H1 (cell line): ENCODE measurements at regions of chr16 and their contacts with region 1.

Region 1: DNA sequence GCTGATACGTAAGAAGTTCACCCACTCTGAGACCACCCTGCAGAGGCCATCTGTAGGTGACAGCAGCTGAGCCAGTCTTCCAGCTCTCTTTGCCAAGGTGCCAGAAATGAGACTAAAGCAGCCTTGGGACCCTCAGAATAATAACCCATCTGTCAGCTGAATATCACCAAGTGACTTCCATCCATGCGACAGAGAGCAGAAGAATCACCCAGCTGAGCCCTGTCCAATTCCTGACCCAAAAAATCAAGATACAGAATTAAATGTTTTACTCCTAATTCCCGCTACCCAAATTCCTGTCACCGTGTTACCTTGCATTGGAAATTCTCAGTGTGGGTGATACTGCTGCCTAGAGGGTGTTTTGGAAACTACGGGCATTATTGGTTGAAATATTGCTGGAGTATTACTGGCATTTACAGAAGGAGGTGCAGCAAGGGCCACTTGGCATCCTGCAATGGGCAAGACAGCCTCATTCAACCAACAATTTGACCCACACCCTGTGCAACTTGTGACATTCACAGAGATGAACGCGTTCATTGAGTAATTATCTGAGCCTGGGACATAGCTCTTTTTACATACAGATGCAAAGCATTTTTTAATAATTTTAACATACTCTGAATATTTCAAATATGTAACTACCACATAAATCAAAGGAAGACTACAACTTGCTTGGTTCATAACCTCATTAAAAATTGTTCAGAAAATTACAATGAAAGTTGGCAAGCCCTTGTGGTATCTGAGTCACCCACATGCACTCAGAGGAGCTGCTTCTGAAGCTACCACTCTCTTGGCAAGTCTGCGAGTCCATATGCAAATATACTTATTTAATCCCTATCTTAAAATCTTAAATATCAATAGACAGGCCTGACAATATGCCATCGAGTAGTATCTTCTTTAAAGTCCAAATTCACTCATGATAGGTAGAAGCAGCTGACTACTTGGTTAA is 126.6 kb downstream of the C16orf95 start:
- DNase-seq: no peak
- H3K4me3 ChIP-seq: no peak overlapping the region
- H3K27ac ChIP-seq: no peak overlapping the region
- H3K4me1 ChIP-seq: peaks cover 0 to 9% (median 4%) of the 10 kb centered on the region in 4 experiments; a peak in 4 of 7 replicates
- H3K27me3 ChIP-seq: no peaks in the 10 kb centered on the region; a peak in 1 of 7 replicates
- CTCF ChIP-seq: peak in 2 of 3 experiments; percentile 50 to 57; a peak in 2 of 4 replicates
- EP300 ChIP-seq: no peak
- POLR2A ChIP-seq: no peak
- RAD21 ChIP-seq: peak; percentile 54 to 63

Region 2: GRCh38 chr16:87178177-87178863 is 12.2 kb before region 1 on chr16:
- CTCF ChIA-PET with region 1: interaction called, 13 read pairs
- POLR2A ChIA-PET with region 1: interaction called, 4 read pairs
- DNase-seq: no peak
- H3K4me3 ChIP-seq: peak overlapping the region; percentile 0 to 50 (median 20); a peak in 5 of 8 replicates
- H3K27ac ChIP-seq: no peak overlapping the region
- H3K4me1 ChIP-seq: peaks cover 0 to 16% (median 9%) of the 10 kb centered on the region in 4 experiments; a peak in 6 of 7 replicates
- H3K27me3 ChIP-seq: peaks cover 0 to 6% (median 1%) of the 10 kb centered on the region in 4 experiments; a peak in 3 of 7 replicates
- CTCF ChIP-seq: no peak
- EP300 ChIP-seq: no peak
- POLR2A ChIP-seq: no peak
- RAD21 ChIP-seq: no peak

Region 3: DNA sequence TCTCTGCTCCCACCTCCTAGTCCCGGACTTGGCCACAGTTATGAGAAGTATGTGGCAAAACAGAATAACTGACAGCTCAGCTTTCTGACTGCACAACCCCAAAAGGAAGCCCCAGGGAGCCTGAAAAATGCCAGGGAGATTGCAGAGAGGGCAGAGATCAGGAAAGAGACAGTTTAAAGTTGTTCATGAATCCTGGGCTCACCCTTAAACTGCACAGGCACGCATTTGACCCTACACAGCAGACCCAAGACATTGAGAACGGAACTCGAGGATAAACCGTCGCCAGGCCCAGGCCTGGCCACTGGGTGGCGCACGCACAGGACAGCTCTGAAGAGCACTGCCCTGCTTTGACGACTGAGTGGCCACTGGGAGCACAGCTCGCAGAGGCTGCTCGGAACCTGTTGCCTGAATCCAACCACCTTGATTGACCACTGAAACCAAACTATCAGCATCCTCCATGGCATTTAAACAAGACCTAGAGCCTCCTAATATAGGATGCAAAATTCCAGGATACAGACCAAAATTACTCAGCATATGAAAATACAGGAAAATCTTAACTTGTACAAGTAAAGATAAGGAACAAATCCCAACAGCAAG is 12.6 kb after region 1 on chr16:
- CTCF ChIA-PET with region 1: interaction called, 23 read pairs
- POLR2A ChIA-PET with region 1: no interaction called
- DNase-seq: peak; percentile 74 to 92
- H3K4me3 ChIP-seq: no peak overlapping the region
- H3K27ac ChIP-seq: no peak overlapping the region
- H3K4me1 ChIP-seq: peaks cover 0 to 8% (median 6%) of the 10 kb centered on the region in 4 experiments; a peak in 4 of 7 replicates
- H3K27me3 ChIP-seq: no peaks in the 10 kb centered on the region; a peak in 2 of 7 replicates
- CTCF ChIP-seq: peak; percentile 98 to 100 (median 99)
- EP300 ChIP-seq: no peak
- POLR2A ChIP-seq: no peak
- RAD21 ChIP-seq: peak; percentile 78 to 85